ENCODE measurements at regions of chr16 and their contacts with region 1.

Region 1: GRCh38 chr16:67892899-67893742 is at the start of gene PSKH1:
- DNase-seq: peak; percentile 94
- H3K4me3 ChIP-seq: peak within 1 kb of the TSS; percentile 88 to 96 (median 91)
- H3K27ac ChIP-seq: peak within 1 kb of the TSS; percentile 80
- H3K4me1 ChIP-seq: peaks cover 7% of the 10 kb centered on the region
- H3K27me3 ChIP-seq: no peaks in the 10 kb centered on the region
- CTCF ChIP-seq: no peak
- total RNA-seq, gene PSKH1: 11.8 to 18.4 TPM

Region 2: DNA sequence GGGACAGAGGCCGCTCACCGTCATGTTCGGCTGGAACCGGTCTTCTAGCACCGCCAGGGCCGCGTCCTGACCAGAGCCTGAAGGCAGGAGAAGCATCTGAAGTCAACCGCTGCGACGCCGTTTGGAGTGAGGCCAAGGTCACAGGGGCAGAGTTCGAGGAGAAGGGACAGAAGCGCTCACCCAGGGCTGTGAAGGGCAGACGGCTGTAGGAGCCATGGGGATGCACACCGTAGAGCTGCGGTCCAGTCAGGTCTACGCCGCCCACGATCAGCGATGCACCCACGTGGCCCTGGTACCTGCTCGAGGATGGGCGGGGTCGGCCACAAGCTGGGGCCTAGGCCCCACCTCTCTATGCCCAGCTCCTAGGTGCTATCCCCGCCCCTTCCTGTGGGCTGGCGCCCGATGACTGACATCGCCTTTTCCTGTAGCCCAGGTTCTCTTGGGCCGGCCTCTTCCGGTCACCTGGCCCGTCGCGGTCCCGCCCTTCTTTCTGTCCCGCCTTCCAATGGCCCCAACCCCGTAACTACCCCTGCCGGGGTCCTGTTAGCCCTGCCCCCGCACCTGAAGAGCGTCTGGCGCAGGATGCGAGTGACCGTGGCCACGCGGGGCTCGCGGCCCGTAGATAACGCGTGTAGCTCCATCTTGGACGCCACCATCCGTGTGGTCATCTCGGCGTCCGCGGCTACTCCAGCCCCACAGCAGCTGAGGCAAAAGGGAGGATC is 42.4 kb after region 1 on chr16:
- CTCF ChIA-PET with region 1: no interaction called
- dilution Hi-C with region 1: no loop called
- in situ Hi-C with region 1: no loop called
- intact Hi-C with region 1: loop called (anchors 2 kb)
- DNase-seq: peak; percentile 98
- H3K4me3 ChIP-seq: peak overlapping the region; percentile 61 to 88 (median 84)
- H3K27ac ChIP-seq: peak overlapping the region; percentile 57
- H3K4me1 ChIP-seq: peaks cover 18% of the 10 kb centered on the region
- H3K27me3 ChIP-seq: no peaks in the 10 kb centered on the region
- CTCF ChIP-seq: no peak

Region 3: DNA sequence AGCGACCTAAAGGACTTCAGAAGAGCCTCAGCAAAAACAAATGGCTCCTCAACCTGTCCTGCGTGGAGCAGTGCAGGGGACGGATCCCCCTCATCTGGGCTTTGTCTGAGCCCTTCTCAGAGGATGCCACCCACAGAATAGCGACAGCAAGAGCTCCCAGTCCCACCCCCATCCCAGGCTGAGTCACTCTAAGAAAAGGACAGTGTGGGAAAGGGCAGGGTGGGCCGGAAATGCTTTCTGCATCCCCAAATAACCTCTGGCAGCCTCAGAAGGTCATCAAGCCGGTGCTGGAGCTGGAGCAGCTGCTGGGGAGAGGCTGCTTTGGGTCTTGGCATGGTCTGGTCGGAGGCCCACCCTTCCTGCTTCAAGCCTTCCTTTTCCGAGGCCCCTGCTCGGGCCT is 66.4 kb after region 1 on chr16:
- CTCF ChIA-PET with region 1: no interaction called
- dilution Hi-C with region 1: no loop called
- in situ Hi-C with region 1: no loop called
- intact Hi-C with region 1: no loop called
- DNase-seq: no peak
- H3K4me3 ChIP-seq: no peak overlapping the region
- H3K27ac ChIP-seq: no peak overlapping the region
- H3K4me1 ChIP-seq: peaks cover 32% of the 10 kb centered on the region
- H3K27me3 ChIP-seq: no peaks in the 10 kb centered on the region
- CTCF ChIP-seq: no peak

Region 4: GRCh38 chr16:68200088-68200783 is 307.1 kb after region 1 on chr16:
- CTCF ChIA-PET with region 1: no interaction called
- dilution Hi-C with region 1: loop called (anchors 25 kb)
- in situ Hi-C with region 1: no loop called
- intact Hi-C with region 1: no loop called
- DNase-seq: peak; percentile 54
- H3K4me3 ChIP-seq: no peak overlapping the region
- H3K27ac ChIP-seq: no peak overlapping the region
- H3K4me1 ChIP-seq: no peaks in the 10 kb centered on the region
- H3K27me3 ChIP-seq: no peaks in the 10 kb centered on the region
- CTCF ChIP-seq: no peak